Dorsolateral prefrontal cortex (tissue), 120 donors: ENCODE measurements at regions of chr3 and their contacts with region 1.

Region 1: GRCh38 chr3:9749645-9750555 is at the start of gene OGG1:
- DNase-seq: peak; percentile 95 to 98 (median 97)
- H3K4me3 ChIP-seq: peak within 1 kb of the TSS; percentile 56 to 94 (median 80)
- H3K27ac ChIP-seq: peak within 1 kb of the TSS; percentile 76 to 96 (median 92)
- H3K27me3 ChIP-seq: no peaks in the 10 kb centered on the region
- CTCF ChIP-seq: peak in 52 of 56 donors; percentile 26 to 71 (median 48)
- total RNA-seq, gene OGG1: 18.6 to 54.6 (median 30.3) TPM

Region 2: DNA sequence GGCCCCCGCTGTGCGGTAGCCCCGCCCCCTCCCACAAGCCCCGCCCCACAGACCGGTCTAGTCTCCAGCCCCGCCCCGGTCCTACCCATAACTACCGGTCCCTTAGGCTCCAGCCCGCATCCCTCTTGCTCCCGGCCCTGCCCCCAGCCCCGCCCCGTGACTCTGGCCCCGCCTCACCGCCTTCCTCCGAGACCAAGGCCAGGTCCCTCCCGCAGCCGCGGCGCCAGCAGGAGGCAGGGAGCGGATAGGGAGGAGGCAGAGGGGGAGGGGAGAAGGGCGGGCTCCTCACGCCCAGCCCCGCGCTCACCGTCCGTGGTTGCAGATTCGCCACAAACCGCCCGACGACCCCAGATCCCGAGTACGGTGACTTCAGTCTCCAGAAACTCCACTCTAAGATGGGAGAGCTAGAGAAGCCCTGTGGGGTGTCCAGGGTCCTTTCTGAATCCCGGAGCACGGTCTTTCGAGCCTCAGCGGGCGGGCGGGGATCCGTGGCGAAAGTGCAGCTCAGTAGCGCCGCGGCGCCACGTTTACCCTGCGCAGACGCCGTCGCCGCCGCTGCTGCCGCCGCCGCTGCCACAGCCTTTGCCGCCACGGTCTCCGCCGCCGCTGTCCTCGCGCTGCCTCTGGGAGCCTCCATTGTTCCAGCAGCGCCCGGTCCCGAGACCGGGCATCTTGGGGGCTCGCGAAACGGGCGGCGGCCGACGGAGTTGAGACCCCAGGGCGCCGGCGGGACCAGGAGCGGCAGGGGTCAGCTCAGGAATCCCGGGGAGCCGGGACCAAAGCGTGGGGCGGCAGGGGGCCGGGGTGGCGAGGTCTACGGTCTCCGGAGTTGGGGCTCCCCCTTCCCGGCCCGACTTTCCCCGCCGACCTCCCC is 18.5 kb before region 1 on chr3 and contains the start of gene BRPF1:
- intact Hi-C with region 1: loop called (anchors 1 kb)
- DNase-seq: peak; percentile 98 to 100 (median 99)
- H3K4me3 ChIP-seq: peak within 1 kb of the TSS; percentile 70 to 100 (median 97)
- H3K27ac ChIP-seq: peak within 1 kb of the TSS; percentile 74 to 99 (median 97)
- H3K27me3 ChIP-seq: no peaks in the 10 kb centered on the region
- CTCF ChIP-seq: peak in 37 of 56 donors; percentile 10 to 64 (median 30)
- total RNA-seq, gene BRPF1: 10.7 to 25.9 (median 16.3) TPM

Region 3: GRCh38 chr3:9884555-9885165 is 134.8 kb after region 1 on chr3:
- intact Hi-C with region 1: no loop called
- DNase-seq: no peak
- H3K4me3 ChIP-seq: no peak overlapping the region
- H3K27ac ChIP-seq: no peak overlapping the region
- H3K27me3 ChIP-seq: no peaks in the 10 kb centered on the region
- CTCF ChIP-seq: no peak